K562 (cell line): ENCODE measurements at regions of chr11 and their contacts with region 1.

Region 1: DNA sequence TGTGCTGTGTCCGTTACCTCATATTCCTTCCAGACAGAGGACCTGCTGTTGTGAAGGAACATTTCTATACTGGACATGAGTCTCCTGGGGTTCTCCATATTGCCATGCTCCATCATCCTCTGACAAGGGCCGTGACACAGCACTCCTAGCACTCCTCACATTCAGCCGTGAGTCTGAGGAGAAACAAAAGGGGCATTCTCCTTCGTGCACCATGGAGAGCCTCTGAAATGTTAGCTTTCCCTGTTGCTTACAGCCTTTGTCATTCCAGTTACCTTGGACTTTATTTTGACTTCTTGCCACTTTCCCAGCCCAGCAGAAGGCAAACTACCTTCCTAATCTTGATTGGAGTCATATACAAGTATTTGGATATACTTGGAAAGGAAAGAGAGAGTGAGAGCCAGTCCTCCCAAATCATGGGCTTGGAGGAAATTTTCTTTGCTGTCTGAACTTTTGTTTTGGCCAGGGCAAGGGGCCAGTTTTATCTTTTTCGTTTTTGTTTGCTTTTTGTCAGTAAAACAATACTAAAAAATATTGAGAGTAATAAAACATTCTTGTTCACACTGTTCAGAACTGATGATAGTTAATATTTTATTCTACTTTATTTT is 29.1 kb upstream of the TECTA start:
- DNase-seq: peak in 2 of 4 experiments; percentile 5 to 11
- ATAC-seq: peak; percentile 42; the same call in 1 of the 3 replicates
- H3K4me3 ChIP-seq: no peak overlapping the region
- H3K27ac ChIP-seq: no peak overlapping the region
- H3K4me1 ChIP-seq: no peaks in the 10 kb centered on the region
- H3K27me3 ChIP-seq: no peaks in the 10 kb centered on the region
- CTCF ChIP-seq: no peak
- EP300 ChIP-seq: no peak
- POLR2A ChIP-seq: no peak
- RAD21 ChIP-seq: no peak

Region 2: GRCh38 chr11:121129362-121130340 is 57.7 kb after region 1 on chr11:
- CTCF ChIA-PET with region 1: no interaction called
- POLR2A ChIA-PET with region 1: no interaction called
- in situ Hi-C with region 1: no loop called
- intact Hi-C with region 1: no loop called
- DNase-seq: no peak
- ATAC-seq: no peak
- H3K4me3 ChIP-seq: no peak overlapping the region
- H3K27ac ChIP-seq: no peak overlapping the region
- H3K4me1 ChIP-seq: peaks cover 0 to 5% of the 10 kb centered on the region in 2 experiments; a peak in 1 of 5 replicates
- H3K27me3 ChIP-seq: peaks cover 31 to 52% of the 10 kb centered on the region in 2 experiments
- CTCF ChIP-seq: no peak
- EP300 ChIP-seq: no peak
- POLR2A ChIP-seq: no peak
- RAD21 ChIP-seq: no peak

Region 3: GRCh38 chr11:122019908-122020694 is 948.2 kb after region 1 on chr11:
- CTCF ChIA-PET with region 1: no interaction called
- POLR2A ChIA-PET with region 1: no interaction called
- in situ Hi-C with region 1: loop called (anchors 10 kb)
- intact Hi-C with region 1: no loop called
- DNase-seq: no peak
- ATAC-seq: no peak
- H3K4me3 ChIP-seq: no peak overlapping the region
- H3K27ac ChIP-seq: no peak overlapping the region
- H3K4me1 ChIP-seq: no peaks in the 10 kb centered on the region
- H3K27me3 ChIP-seq: no peaks in the 10 kb centered on the region
- CTCF ChIP-seq: no peak
- EP300 ChIP-seq: no peak
- POLR2A ChIP-seq: no peak
- RAD21 ChIP-seq: no peak